ENCODE measurements at regions of chr20 and their contacts with region 1.

Region 1: DNA sequence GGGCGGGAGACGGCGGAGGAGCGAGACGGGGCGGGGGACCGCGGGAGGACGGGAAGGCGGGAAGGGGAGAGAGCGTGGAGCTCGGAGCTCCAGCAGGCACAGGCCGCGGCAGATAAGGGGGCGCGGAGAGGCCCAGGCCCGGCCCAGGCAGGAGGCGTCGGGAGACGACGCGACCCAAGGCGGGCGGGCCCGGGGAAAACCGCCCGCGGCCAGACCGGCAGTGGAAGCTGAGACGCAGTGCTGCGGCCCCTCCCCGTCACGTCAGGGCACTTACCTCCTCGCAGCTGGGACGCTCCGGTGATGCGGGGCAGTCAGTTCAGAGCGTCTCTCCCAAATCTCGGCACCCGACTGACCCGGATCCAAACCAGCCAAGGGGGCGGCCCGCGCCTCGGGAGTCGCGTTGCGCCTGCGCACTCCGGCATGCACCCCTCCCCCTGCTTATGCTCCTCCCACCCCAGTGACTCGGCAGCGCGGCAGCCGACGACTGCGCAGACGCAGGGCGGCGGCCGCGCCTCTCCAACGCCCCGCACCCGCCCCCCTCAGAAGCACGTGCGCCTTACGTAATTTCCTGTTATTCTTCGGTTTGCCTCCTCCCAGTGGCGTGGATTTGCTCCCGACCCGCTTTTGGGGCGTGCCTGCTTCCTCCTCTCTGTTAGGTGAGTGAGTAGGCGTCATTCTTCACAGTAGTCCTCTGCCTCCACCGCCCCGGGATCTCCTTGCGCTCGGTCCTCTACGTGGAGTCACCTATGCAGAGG is at the start of gene OSER1:
- DNase-seq: peak; percentile 98 to 99
- ATAC-seq: peak; percentile 83 to 85
- H3K4me3 ChIP-seq: peak within 1 kb of the TSS; percentile 90 to 98 (median 95)
- H3K27ac ChIP-seq: peak within 1 kb of the TSS; percentile 97 to 100 (median 98)
- H3K4me1 ChIP-seq: peaks cover 44 to 50% of the 10 kb centered on the region in 2 donors
- H3K27me3 ChIP-seq: no peaks in the 10 kb centered on the region
- CTCF ChIP-seq: no peak
- POLR2A ChIP-seq: peak; percentile 97 to 98
- total RNA-seq, gene OSER1: 73.0 to 114 (median 94.5) TPM

Region 2: DNA sequence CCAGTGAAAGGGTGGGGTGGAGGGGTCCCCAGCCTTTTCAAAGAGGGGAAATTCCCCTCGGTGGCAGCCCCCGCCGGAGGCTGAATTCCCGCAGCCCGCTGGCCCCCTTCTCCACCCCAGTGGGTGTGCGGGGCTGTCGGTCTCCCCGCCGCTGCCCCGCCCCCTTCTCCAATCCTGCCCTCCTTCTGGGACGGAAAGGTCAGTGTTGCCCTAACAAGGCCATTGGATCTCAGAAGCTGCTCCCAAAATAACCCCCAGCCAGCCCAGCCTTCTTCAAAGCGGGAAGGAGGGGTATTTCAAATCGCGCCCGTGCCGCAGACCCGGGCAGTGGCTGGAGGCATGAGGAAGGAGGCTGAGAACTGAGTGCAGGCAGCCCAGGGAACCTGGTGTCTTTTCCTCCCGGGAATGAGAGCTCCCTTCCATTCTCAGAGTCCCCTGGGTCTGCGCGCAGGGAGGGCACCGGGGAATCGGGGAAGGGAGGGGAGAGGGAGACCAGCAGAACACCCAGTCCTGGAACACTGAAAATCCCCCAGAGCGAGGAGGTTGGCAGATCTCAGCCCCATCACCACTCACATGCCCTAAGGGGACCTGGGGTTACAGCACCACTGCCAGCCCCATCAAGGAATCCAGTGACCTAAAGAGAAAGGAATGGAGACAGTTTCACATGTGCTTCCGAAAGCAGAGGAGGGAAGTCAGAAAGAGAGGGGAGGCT is 23.4 kb before region 1 on chr20 and contains the start of gene JPH2:
- in situ Hi-C with region 1: no loop called
- intact Hi-C with region 1: loop called (anchors 2 kb)
- DNase-seq: peak; percentile 79 to 91
- ATAC-seq: peak; percentile 65 to 70
- H3K4me3 ChIP-seq: peak within 1 kb of the TSS; percentile 70 to 77 (median 73)
- H3K27ac ChIP-seq: peak within 1 kb of the TSS; percentile 92 to 98 (median 96)
- H3K4me1 ChIP-seq: peaks cover 56 to 65% of the 10 kb centered on the region in 2 donors
- H3K27me3 ChIP-seq: no peaks in the 10 kb centered on the region
- CTCF ChIP-seq: no peak
- POLR2A ChIP-seq: peak; percentile 60 to 81
- total RNA-seq, gene JPH2: 18.3 to 86.6 (median 38.0) TPM

Region 3: GRCh38 chr20:44247586-44248409 is 37.2 kb after region 1 on chr20:
- in situ Hi-C with region 1: no loop called
- intact Hi-C with region 1: no loop called
- DNase-seq: no peak
- ATAC-seq: no peak
- H3K4me3 ChIP-seq: peak overlapping the region in 2 of 4 donors; percentile 19 to 23
- H3K27ac ChIP-seq: no peak overlapping the region
- H3K4me1 ChIP-seq: peaks cover 0 to 4% of the 10 kb centered on the region in 2 donors
- H3K27me3 ChIP-seq: peaks cover 14 to 31% (median 26%) of the 10 kb centered on the region in 3 donors
- CTCF ChIP-seq: peak in 1 of 5 experiments; percentile 23
- POLR2A ChIP-seq: no peak

Region 4: GRCh38 chr20:44521484-44522481 is 311.2 kb after region 1 on chr20 and contains the start of gene SERINC3:
- in situ Hi-C with region 1: no loop called
- intact Hi-C with region 1: loop called (anchors 2 kb)
- DNase-seq: peak; percentile 94 to 96
- ATAC-seq: peak; percentile 93 to 95
- H3K4me3 ChIP-seq: peak within 1 kb of the TSS; percentile 94 to 100 (median 98)
- H3K27ac ChIP-seq: peak within 1 kb of the TSS; percentile 98 to 100 (median 100)
- H3K4me1 ChIP-seq: peaks cover 42 to 49% of the 10 kb centered on the region in 2 donors
- H3K27me3 ChIP-seq: no peaks in the 10 kb centered on the region
- CTCF ChIP-seq: no peak
- POLR2A ChIP-seq: peak; percentile 97
- total RNA-seq, gene SERINC3: 93.3 to 174 (median 139) TPM

Region 5: GRCh38 chr20:44609511-44610312 is 399.1 kb after region 1 on chr20:
- in situ Hi-C with region 1: loop called in 3 of 4 experiments (anchors 25 kb)
- intact Hi-C with region 1: loop called (anchors 5 kb)
- DNase-seq: peak; percentile 81 to 88
- ATAC-seq: peak; percentile 94
- H3K4me3 ChIP-seq: peak overlapping the region; percentile 35 to 44 (median 41)
- H3K27ac ChIP-seq: peak overlapping the region; percentile 88 to 93 (median 92)
- H3K4me1 ChIP-seq: peaks cover 35 to 43% of the 10 kb centered on the region in 2 donors
- H3K27me3 ChIP-seq: no peaks in the 10 kb centered on the region
- CTCF ChIP-seq: peak; percentile 96 to 99 (median 98)
- POLR2A ChIP-seq: no peak

Region 6: DNA sequence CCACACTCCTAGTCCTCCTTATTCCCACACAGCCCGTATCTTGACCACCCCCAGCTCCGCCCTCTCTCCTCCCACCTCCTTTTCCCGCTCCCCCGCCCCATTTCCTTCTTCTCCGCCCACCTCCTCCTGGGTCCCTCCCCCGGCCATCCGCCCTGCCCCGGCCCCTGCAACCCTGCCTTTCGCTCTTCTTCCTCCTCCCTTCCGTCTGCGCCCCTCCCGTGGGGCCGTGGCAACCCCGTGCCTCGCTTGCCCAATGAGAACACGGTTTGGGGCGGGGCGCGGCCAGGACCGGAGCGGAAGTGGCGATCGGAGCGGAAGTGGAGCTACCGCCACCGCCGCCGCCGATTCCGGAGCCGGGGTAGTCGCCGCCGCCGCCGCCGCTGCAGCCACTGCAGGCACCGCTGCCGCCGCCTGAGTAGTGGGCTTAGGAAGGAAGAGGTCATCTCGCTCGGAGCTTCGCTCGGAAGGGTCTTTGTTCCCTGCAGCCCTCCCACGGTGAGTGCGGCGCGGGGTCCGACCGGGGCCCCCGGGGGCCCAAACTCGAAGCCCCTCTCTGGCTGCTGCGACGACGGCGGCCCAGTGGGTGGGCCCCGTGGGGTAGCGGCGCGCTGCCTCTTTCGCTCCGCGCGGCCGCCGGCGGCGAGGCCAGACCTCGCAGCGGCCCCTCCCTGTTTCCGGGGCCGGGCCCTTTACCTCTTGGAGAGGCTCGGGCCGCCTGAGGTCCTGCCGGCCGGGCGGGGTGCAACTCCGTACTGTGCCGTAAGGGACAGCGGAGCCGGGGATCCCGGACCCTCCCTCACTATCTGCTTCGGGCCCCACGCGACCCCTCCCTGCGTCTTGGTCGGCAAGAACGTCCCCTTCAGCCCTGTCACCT is 675.0 kb after region 1 on chr20 and contains the start of gene YWHAB:
- in situ Hi-C with region 1: no loop called
- intact Hi-C with region 1: loop called (anchors 10 kb)
- DNase-seq: peak; percentile 97
- ATAC-seq: peak; percentile 97 to 98
- H3K4me3 ChIP-seq: peak within 1 kb of the TSS; percentile 74 to 96 (median 80)
- H3K27ac ChIP-seq: peak within 1 kb of the TSS; percentile 84 to 97 (median 92)
- H3K4me1 ChIP-seq: peaks cover 29 to 39% of the 10 kb centered on the region in 2 donors
- H3K27me3 ChIP-seq: no peaks in the 10 kb centered on the region
- CTCF ChIP-seq: peak in 3 of 5 experiments; percentile 8 to 19 (median 9)
- POLR2A ChIP-seq: peak; percentile 70 to 80
- total RNA-seq, gene YWHAB: 73.2 to 77.9 (median 75.2) TPM

Region 7: GRCh38 chr20:45362804-45363610 is 1152.4 kb after region 1 on chr20 and contains the start of gene SYS1:
- in situ Hi-C with region 1: loop called in 1 of 4 experiments (anchors 25 kb)
- intact Hi-C with region 1: loop called (anchors 5 kb)
- DNase-seq: peak; percentile 98
- ATAC-seq: peak; percentile 63 to 76
- H3K4me3 ChIP-seq: peak within 1 kb of the TSS; percentile 66 to 86 (median 75)
- H3K27ac ChIP-seq: peak within 1 kb of the TSS; percentile 94 to 99 (median 96)
- H3K4me1 ChIP-seq: peaks cover 26 to 27% of the 10 kb centered on the region in 2 donors
- H3K27me3 ChIP-seq: no peaks in the 10 kb centered on the region
- CTCF ChIP-seq: peak; percentile 89 to 95 (median 95)
- POLR2A ChIP-seq: peak; percentile 90 to 97
- total RNA-seq, gene SYS1: 34.0 to 59.5 (median 43.7) TPM